Sigmoid colon (tissue), 7 donors: ENCODE measurements at regions of chrX and their contacts with region 1.

Region 1: GRCh38 chrX:22652596-22652995 is 347.2 kb upstream of the DDX53 start:
- DNase-seq: no peak
- H3K4me3 ChIP-seq: no peak overlapping the region
- H3K27ac ChIP-seq: peak overlapping the region in 3 of 4 donors; percentile 65 to 76 (median 74)
- H3K4me1 ChIP-seq: peaks cover 0 to 18% (median 3%) of the 10 kb centered on the region in 4 donors
- H3K27me3 ChIP-seq: no peaks in the 10 kb centered on the region
- CTCF ChIP-seq: no peak
- EP300 ChIP-seq: no peak
- POLR2A ChIP-seq: no peak

Region 2: DNA sequence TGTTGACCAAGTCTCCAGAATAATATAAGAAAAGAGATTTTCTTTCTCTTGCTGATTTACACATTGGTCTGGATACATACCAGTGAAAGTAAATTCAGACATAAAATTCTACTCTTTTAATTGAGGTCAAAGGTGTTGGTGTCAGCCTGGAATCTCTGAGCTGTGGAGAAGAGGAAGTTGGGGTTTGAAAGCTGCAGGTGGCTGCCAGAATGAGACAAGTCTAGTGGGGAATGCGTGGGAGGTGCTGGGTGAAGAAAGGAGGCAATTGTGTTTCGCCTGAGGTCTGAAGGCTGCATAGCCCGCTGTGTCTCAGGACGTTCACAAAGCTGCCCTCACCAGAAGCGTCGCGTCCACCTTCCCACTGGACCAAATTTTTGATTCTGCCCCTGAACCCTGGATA is 589.3 kb before region 1 on chrX:
- intact Hi-C with region 1: no loop called
- DNase-seq: no peak
- H3K4me3 ChIP-seq: no peak overlapping the region
- H3K27ac ChIP-seq: no peak overlapping the region
- H3K4me1 ChIP-seq: no peaks in the 10 kb centered on the region
- H3K27me3 ChIP-seq: no peaks in the 10 kb centered on the region
- CTCF ChIP-seq: no peak
- EP300 ChIP-seq: no peak
- POLR2A ChIP-seq: no peak

Region 3: GRCh38 chrX:22389556-22390179 is 262.9 kb before region 1 on chrX:
- intact Hi-C with region 1: loop called (anchors 10 kb)
- DNase-seq: no peak
- H3K4me3 ChIP-seq: no peak overlapping the region
- H3K27ac ChIP-seq: peak overlapping the region in 3 of 4 donors; percentile 60 to 79 (median 65)
- H3K4me1 ChIP-seq: peaks cover 0 to 16% (median 3%) of the 10 kb centered on the region in 4 donors
- H3K27me3 ChIP-seq: no peaks in the 10 kb centered on the region
- CTCF ChIP-seq: no peak
- EP300 ChIP-seq: peak in 1 of 4 donors; percentile 27
- POLR2A ChIP-seq: no peak

Region 4: GRCh38 chrX:22699581-22700091 is 47.0 kb after region 1 on chrX:
- intact Hi-C with region 1: no loop called
- DNase-seq: no peak
- H3K4me3 ChIP-seq: no peak overlapping the region
- H3K27ac ChIP-seq: peak overlapping the region in 3 of 4 donors; percentile 51 to 59 (median 52)
- H3K4me1 ChIP-seq: no peaks in the 10 kb centered on the region
- H3K27me3 ChIP-seq: no peaks in the 10 kb centered on the region
- CTCF ChIP-seq: no peak
- EP300 ChIP-seq: no peak
- POLR2A ChIP-seq: no peak